H1 (cell line): ENCODE measurements at regions of chr1 and their contacts with region 1.

Region 1: DNA sequence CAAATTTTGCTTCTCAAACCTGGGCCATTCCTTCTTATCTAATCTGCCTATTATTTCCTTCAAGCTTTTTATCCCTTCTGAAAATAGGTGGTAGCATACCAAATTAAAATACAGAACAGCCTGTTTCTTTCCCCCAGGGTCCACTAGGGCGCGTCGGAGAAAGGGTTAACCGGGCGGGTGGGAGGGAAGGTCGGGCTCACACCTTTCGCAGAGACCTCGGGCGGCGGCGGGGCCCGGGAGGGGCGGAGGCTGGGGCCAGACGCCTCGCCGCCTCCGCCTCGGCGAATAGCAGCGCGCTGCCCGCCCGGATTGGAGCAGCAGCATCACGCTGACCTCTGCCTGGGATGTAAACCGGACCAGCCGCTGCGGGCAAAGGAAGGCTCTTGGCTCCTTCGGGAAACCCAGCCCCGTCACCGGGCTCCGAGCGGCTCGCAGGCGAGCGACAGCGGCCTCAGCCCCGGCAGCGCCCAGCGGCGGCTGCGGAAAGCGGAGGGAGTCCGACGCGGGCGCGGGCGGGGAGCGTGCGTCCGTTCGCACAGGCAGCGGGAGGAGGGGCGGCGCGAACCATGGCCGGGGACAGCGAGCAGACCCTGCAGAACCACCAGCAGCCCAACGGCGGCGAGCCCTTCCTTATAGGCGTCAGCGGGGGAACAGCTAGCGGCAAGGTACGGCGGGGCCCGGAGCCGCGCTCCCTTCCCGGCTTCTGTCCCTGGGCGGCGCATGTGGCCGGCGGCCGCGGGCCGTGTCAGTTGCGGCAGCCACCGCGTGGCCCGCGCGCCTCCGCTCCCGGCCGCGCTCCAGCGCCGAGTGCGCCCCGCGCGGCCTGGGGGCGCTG is at the start of gene UCK2:
- DNase-seq: peak; percentile 56 to 89
- H3K4me3 ChIP-seq: peak within 1 kb of the TSS; percentile 89 to 99 (median 97)
- H3K27ac ChIP-seq: peak within 1 kb of the TSS; percentile 88
- H3K4me1 ChIP-seq: peaks cover 1 to 7% (median 6%) of the 10 kb centered on the region in 4 experiments; a peak in 5 of 7 replicates
- H3K27me3 ChIP-seq: no peaks in the 10 kb centered on the region
- CTCF ChIP-seq: peak in 1 of 3 experiments; percentile 9; a peak in 2 of 4 replicates
- EP300 ChIP-seq: no peak
- POLR2A ChIP-seq: peak in 1 of 2 experiments; percentile 88; a peak in 2 of 3 replicates
- RAD21 ChIP-seq: peak in 1 of 2 experiments; percentile 3; a peak in 1 of 4 replicates
- total RNA-seq, gene UCK2: 102 and 103 TPM in 2 replicates

Region 2: GRCh38 chr1:165768513-165769394 is 58.7 kb before region 1 on chr1 and contains the start of gene TMCO1:
- CTCF ChIA-PET with region 1: interaction called, 5 read pairs
- POLR2A ChIA-PET with region 1: interaction called, 22 read pairs
- DNase-seq: peak; percentile 83 to 89
- H3K4me3 ChIP-seq: peak within 1 kb of the TSS; percentile 65 to 93 (median 82)
- H3K27ac ChIP-seq: peak within 1 kb of the TSS; percentile 78
- H3K4me1 ChIP-seq: peaks cover 0 to 2% (median 0%) of the 10 kb centered on the region in 4 experiments; a peak in 1 of 7 replicates
- H3K27me3 ChIP-seq: no peaks in the 10 kb centered on the region
- CTCF ChIP-seq: no peak
- EP300 ChIP-seq: no peak
- POLR2A ChIP-seq: peak; percentile 66 to 96
- RAD21 ChIP-seq: peak in 1 of 2 experiments; percentile 16; a peak in 1 of 4 replicates
- total RNA-seq, gene TMCO1: 53.1 and 61.6 TPM in 2 replicates

Region 3: GRCh38 chr1:165815725-165816124 is 11.8 kb before region 1 on chr1:
- CTCF ChIA-PET with region 1: interaction called, 4 read pairs
- POLR2A ChIA-PET with region 1: interaction called, 12 read pairs
- DNase-seq: no peak
- H3K4me3 ChIP-seq: no peak overlapping the region
- H3K27ac ChIP-seq: no peak overlapping the region
- H3K4me1 ChIP-seq: no peaks in the 10 kb centered on the region
- H3K27me3 ChIP-seq: no peaks in the 10 kb centered on the region
- CTCF ChIP-seq: no peak
- EP300 ChIP-seq: no peak
- POLR2A ChIP-seq: no peak
- RAD21 ChIP-seq: no peak

Region 4: GRCh38 chr1:165842671-165843129 is 15.2 kb after region 1 on chr1:
- CTCF ChIA-PET with region 1: interaction called, 7 read pairs
- POLR2A ChIA-PET with region 1: interaction called, 114 read pairs
- DNase-seq: no peak
- H3K4me3 ChIP-seq: no peak overlapping the region
- H3K27ac ChIP-seq: no peak overlapping the region
- H3K4me1 ChIP-seq: peaks cover 5 to 35% (median 16%) of the 10 kb centered on the region in 4 experiments
- H3K27me3 ChIP-seq: no peaks in the 10 kb centered on the region
- CTCF ChIP-seq: no peak
- EP300 ChIP-seq: no peak
- POLR2A ChIP-seq: no peak
- RAD21 ChIP-seq: no peak

Region 5: DNA sequence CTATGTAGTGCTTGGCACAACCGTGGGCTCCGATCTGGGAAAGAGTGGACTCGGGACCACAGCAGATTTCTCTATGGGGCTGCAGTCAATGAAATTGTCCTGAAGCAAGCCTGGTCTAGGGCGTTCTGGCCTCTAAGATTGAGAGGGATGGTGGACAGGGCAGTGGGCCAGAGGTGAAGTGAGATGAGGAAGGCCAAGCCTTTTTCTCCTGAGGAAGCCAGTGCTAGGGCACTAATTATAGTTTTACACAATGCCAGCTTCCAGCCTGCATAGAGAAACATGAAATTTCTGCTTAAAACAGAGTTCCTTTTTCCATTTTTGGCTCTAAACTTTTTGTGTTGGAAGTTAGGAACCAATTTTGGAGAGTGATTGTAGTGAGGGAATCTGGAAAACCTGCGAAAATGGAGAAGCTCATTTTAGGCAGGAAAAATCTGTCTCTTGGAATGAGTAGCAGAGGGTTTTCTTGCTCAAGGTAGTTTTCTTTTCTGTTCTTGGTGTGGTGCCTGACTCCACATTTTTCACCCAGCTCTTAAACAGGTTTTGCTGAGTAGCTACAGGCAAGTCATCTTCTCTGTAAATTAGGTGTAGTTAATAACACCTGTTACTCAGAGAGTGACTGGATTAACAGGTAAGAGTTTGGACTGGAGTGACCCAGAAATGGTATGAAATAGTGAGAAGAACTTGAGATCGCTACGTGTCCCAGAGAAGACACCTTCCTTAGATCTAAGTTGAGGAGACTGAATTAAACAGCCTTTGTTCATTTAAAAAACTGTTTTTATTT is 22.1 kb after region 1 on chr1:
- CTCF ChIA-PET with region 1: interaction called, 7 read pairs
- POLR2A ChIA-PET with region 1: interaction called, 114 read pairs
- DNase-seq: no peak
- H3K4me3 ChIP-seq: no peak overlapping the region
- H3K27ac ChIP-seq: 0 out of 2 replicates have a peak overlapping the region, but pooled peaks have one; percentile 23
- H3K4me1 ChIP-seq: peaks cover 4 to 11% (median 8%) of the 10 kb centered on the region in 4 experiments; a peak in 5 of 7 replicates
- H3K27me3 ChIP-seq: no peaks in the 10 kb centered on the region
- CTCF ChIP-seq: no peak
- EP300 ChIP-seq: no peak
- POLR2A ChIP-seq: no peak
- RAD21 ChIP-seq: no peak

Region 6: GRCh38 chr1:165857046-165857801 is 29.7 kb after region 1 on chr1:
- CTCF ChIA-PET with region 1: interaction called, 4 read pairs
- POLR2A ChIA-PET with region 1: interaction called, 14 read pairs
- DNase-seq: no peak
- H3K4me3 ChIP-seq: peak overlapping the region in 1 of 4 experiments; percentile 30; a peak in 2 of 8 replicates
- H3K27ac ChIP-seq: no peak overlapping the region
- H3K4me1 ChIP-seq: peaks cover 4 to 32% (median 25%) of the 10 kb centered on the region in 4 experiments
- H3K27me3 ChIP-seq: no peaks in the 10 kb centered on the region
- CTCF ChIP-seq: no peak
- EP300 ChIP-seq: no peak
- POLR2A ChIP-seq: no peak
- RAD21 ChIP-seq: no peak

Region 7: DNA sequence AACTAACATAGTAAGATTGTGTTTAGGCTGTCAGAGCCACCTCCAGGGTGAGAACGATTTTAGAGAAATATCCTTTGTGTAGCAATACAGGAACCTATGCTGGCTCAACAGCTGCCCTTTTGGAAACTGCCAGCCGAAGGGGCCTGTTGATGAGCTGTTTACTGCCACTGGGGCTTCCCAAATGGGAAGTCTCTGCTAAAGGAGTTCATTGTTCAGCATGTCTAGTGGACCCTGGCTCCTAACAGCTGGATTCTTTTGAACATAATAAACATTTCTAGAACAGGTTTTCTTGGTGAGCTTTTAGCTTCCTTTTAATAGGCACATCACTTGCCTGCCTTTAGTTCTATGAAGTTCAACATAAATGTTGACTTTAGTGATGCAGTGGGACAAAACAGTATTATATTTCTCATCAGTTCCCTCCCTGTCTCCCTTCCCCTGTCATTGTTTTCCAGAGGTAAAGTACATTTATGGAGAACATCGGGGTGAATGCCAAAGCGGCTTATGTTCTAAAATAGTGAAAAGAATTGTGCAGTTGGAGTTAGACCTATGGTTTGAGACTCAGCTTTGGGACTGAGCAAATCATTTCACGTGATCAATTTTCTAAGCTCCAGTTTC is 57.3 kb after region 1 on chr1:
- CTCF ChIA-PET with region 1: no interaction called
- POLR2A ChIA-PET with region 1: interaction called, 15 read pairs
- DNase-seq: no peak
- H3K4me3 ChIP-seq: no peak overlapping the region
- H3K27ac ChIP-seq: no peak overlapping the region
- H3K4me1 ChIP-seq: peaks cover 0 to 13% (median 2%) of the 10 kb centered on the region in 4 experiments; a peak in 2 of 7 replicates
- H3K27me3 ChIP-seq: no peaks in the 10 kb centered on the region
- CTCF ChIP-seq: no peak
- EP300 ChIP-seq: no peak
- POLR2A ChIP-seq: no peak
- RAD21 ChIP-seq: no peak